A673 (cell line): ENCODE measurements at regions of chr19 and their contacts with region 1.

Region 1: DNA sequence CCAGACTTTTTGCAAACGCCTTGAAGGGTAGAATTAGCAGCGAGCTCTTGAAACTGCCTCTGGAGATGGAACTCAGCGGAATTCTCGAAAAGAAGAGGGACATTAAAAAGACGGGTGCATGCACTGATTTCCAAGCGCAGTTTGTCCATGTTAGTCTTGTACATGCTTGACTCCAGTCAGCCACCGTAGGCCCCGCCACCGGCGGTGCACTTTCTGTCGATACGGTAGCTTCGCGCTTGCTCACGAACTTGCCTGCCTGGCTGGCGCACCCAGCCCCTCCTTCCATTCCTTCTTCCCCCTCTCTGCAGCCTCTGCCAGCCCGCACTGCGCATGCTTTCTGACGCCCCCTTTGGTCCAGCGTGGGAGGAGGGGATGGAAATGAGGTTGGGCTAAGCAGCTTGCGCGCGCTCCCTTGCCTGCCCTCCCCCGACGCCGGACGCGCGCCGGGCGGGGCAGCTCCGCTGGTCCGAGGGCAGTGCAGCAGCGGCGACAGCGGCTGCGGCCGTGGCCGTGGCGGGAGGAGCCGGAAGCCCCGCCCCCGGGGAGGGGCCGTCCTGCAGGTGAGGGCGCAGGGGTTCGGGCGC is at the start of gene ZNF575:
- DNase-seq: peak; percentile 97
- H3K4me3 ChIP-seq: peak within 1 kb of the TSS; percentile 63
- H3K27ac ChIP-seq: peak within 1 kb of the TSS; percentile 86
- H3K4me1 ChIP-seq: peaks cover 15% of the 10 kb centered on the region
- H3K27me3 ChIP-seq: no peaks in the 10 kb centered on the region
- CTCF ChIP-seq: no peak
- total RNA-seq, gene ZNF575: 2.8 and 3.1 TPM in 2 replicates

Region 2: GRCh38 chr19:42440357-42441048 is 1092.6 kb before region 1 on chr19:
- CTCF ChIA-PET with region 1: no interaction called
- POLR2A ChIA-PET with region 1: interaction called, 15 read pairs
- intact Hi-C with region 1: no loop called
- DNase-seq: peak; percentile 87
- H3K4me3 ChIP-seq: no peak overlapping the region
- H3K27ac ChIP-seq: no peak overlapping the region
- H3K4me1 ChIP-seq: no peaks in the 10 kb centered on the region
- H3K27me3 ChIP-seq: no peaks in the 10 kb centered on the region
- CTCF ChIP-seq: peak; percentile 98

Region 3: DNA sequence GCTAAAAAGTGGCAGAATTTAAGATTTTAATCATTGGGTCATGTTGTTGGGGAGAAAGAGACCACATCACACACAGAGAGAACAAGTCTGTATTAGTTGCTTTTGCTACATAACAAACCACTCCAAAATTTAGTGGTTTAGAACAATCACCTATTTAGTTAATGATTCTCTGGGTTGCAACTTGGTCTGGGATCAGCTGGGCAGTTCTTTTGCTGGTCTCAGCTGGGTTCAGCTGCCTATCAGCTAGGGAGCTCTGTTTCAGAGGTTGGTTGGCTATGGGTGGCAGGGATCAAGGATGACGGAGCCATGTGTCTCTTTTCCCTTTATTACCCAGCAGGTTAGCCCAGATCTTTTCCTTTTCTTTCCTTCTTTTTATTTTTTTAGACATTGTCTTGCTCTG is 51.4 kb after region 1 on chr19:
- CTCF ChIA-PET with region 1: no interaction called
- POLR2A ChIA-PET with region 1: interaction called, 12 read pairs
- intact Hi-C with region 1: no loop called
- DNase-seq: no peak
- H3K4me3 ChIP-seq: no peak overlapping the region
- H3K27ac ChIP-seq: peak overlapping the region; percentile 1
- H3K4me1 ChIP-seq: peaks cover 7% of the 10 kb centered on the region
- H3K27me3 ChIP-seq: no peaks in the 10 kb centered on the region
- CTCF ChIP-seq: no peak

Region 4: GRCh38 chr19:43668406-43669158 is 135.5 kb after region 1 on chr19:
- CTCF ChIA-PET with region 1: no interaction called
- POLR2A ChIA-PET with region 1: no interaction called
- intact Hi-C with region 1: loop called (anchors 10 kb)
- DNase-seq: peak; percentile 98
- H3K4me3 ChIP-seq: peak overlapping the region; percentile 54
- H3K27ac ChIP-seq: peak overlapping the region; percentile 83
- H3K4me1 ChIP-seq: peaks cover 15% of the 10 kb centered on the region
- H3K27me3 ChIP-seq: no peaks in the 10 kb centered on the region
- CTCF ChIP-seq: no peak